Mammary epithelial cell (primary cell): ENCODE measurements at regions of chr12 and their contacts with region 1.

Region 1: GRCh38 chr12:10673660-10674384 is at the start of gene STYK1:
- DNase-seq: peak; percentile 87
- H3K4me3 ChIP-seq: peak within 1 kb of the TSS; percentile 70 to 82 (median 76)
- H3K27ac ChIP-seq: peak within 1 kb of the TSS; percentile 64
- H3K4me1 ChIP-seq: peaks cover 4% of the 10 kb centered on the region
- H3K27me3 ChIP-seq: no peaks in the 10 kb centered on the region
- CTCF ChIP-seq: peak; percentile 93 to 98
- total RNA-seq, gene STYK1: 4.8 to 4.9 TPM

Region 2: GRCh38 chr12:10153271-10154144 is 520.3 kb before region 1 on chr12:
- CTCF ChIA-PET with region 1: no interaction called
- dilution Hi-C with region 1: no loop called
- in situ Hi-C with region 1: no loop called
- intact Hi-C with region 1: loop called (anchors 1 kb)
- DNase-seq: peak; percentile 43
- H3K4me3 ChIP-seq: peak overlapping the region; percentile 17 to 51 (median 45)
- H3K27ac ChIP-seq: no peak overlapping the region
- H3K4me1 ChIP-seq: peaks cover 6% of the 10 kb centered on the region
- H3K27me3 ChIP-seq: no peaks in the 10 kb centered on the region
- CTCF ChIP-seq: peak; percentile 52 to 75

Region 3: GRCh38 chr12:10364815-10365622 is 308.8 kb before region 1 on chr12:
- CTCF ChIA-PET with region 1: no interaction called
- dilution Hi-C with region 1: no loop called
- in situ Hi-C with region 1: no loop called
- intact Hi-C with region 1: loop called (anchors 1 kb)
- DNase-seq: peak; percentile 83
- H3K4me3 ChIP-seq: peak overlapping the region; percentile 52 to 65 (median 61)
- H3K27ac ChIP-seq: peak overlapping the region; percentile 90
- H3K4me1 ChIP-seq: peaks cover 51% of the 10 kb centered on the region
- H3K27me3 ChIP-seq: no peaks in the 10 kb centered on the region
- CTCF ChIP-seq: no peak

Region 4: DNA sequence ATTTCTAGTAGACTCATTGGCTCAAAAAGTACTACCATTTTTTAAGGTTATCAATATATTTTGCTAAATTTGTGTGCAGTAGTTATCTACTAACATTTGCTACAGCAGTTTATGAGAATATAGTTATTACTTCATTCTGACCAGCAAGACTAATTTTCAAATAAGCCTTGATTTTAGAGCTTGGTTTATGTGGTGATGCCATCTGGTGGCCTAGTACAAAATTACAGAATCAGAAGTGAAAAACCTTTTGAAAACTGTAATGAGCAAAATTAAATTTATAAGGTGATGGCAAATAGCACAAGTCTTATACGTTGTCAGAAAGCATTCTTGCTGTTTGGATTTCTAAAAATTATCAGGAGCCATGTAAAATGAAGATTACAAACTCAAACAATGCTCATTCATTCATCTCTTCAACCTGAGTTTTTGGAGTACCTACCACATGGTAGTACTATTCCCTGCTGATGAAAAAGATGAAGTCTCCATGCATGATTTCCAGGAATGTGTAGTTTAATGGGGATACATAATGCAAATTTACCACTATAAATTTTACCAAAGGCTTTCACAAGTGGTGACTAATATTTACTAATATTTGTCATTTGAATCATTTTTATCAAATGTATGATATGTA is 111.4 kb before region 1 on chr12:
- CTCF ChIA-PET with region 1: no interaction called
- dilution Hi-C with region 1: no loop called
- in situ Hi-C with region 1: no loop called
- intact Hi-C with region 1: loop called (anchors 1 kb)
- DNase-seq: peak; percentile 20
- H3K4me3 ChIP-seq: no peak overlapping the region
- H3K27ac ChIP-seq: no peak overlapping the region
- H3K4me1 ChIP-seq: no peaks in the 10 kb centered on the region
- H3K27me3 ChIP-seq: no peaks in the 10 kb centered on the region
- CTCF ChIP-seq: peak; percentile 64

Region 5: DNA sequence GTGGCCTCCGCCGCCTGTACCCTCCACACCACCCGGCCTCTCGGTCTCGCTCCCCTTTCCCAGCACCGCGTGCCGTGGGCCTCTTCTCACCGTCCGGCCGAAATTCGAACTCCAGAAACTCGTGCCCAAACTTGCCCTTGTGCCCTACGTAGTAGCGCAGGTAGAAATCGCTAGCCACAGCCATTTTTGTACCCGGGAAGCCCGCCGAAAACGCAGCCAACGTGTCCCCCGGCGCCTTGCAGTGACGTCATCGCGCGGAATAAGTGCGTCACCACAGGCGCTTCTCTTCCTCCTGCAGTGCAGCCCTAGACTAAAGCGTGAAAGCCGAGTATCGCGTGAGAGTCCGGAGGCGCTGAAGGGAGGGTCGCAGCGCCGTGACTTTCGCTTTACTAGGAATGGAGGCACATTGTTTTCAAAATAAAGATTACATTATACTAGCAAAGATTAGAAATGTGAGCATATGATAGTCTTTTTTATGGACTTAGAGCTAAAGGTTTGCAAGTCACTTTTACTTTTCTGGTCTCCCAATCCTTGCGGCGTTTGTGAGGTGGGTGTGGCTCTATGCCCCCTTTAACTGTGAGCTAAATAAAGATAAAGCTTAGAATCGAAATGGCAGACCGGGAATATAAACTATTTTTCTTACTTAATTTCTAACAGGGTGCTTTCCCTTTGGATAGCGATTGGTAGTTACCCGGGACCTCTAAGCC is 60.3 kb before region 1 on chr12 and contains the start of gene MAGOHB:
- CTCF ChIA-PET with region 1: no interaction called
- dilution Hi-C with region 1: no loop called
- in situ Hi-C with region 1: no loop called
- intact Hi-C with region 1: loop called (anchors 1 kb)
- DNase-seq: peak; percentile 95
- H3K4me3 ChIP-seq: peak within 1 kb of the TSS; percentile 93 to 99 (median 96)
- H3K27ac ChIP-seq: peak within 1 kb of the TSS; percentile 100
- H3K4me1 ChIP-seq: peaks cover 26% of the 10 kb centered on the region
- H3K27me3 ChIP-seq: no peaks in the 10 kb centered on the region
- CTCF ChIP-seq: no peak
- total RNA-seq, gene MAGOHB: 10.7 to 28.0 TPM

Region 6: GRCh38 chr12:10794222-10794621 is 120.4 kb after region 1 on chr12:
- CTCF ChIA-PET with region 1: no interaction called
- dilution Hi-C with region 1: no loop called
- in situ Hi-C with region 1: no loop called
- intact Hi-C with region 1: no loop called
- DNase-seq: no peak
- H3K4me3 ChIP-seq: no peak overlapping the region
- H3K27ac ChIP-seq: no peak overlapping the region
- H3K4me1 ChIP-seq: no peaks in the 10 kb centered on the region
- H3K27me3 ChIP-seq: peaks cover 8% of the 10 kb centered on the region
- CTCF ChIP-seq: no peak